PC-9 (cell line): ENCODE measurements at regions of chr7 and their contacts with region 1.

Region 1: GRCh38 chr7:47786557-47787248 is 161.6 kb downstream of the PKD1L1 start:
- DNase-seq: peak; percentile 99 to 100
- H3K4me3 ChIP-seq: peak overlapping the region; percentile 20
- H3K27ac ChIP-seq: peak overlapping the region; percentile 93
- H3K4me1 ChIP-seq: peaks cover 77% of the 10 kb centered on the region
- H3K27me3 ChIP-seq: no peaks in the 10 kb centered on the region
- CTCF ChIP-seq: no peak

Region 2: GRCh38 chr7:47474937-47475878 is 311.5 kb before region 1 on chr7:
- CTCF ChIA-PET with region 1: no interaction called
- POLR2A ChIA-PET with region 1: no interaction called
- intact Hi-C with region 1: loop called (anchors 1 kb)
- DNase-seq: peak; percentile 99 to 100
- H3K4me3 ChIP-seq: peak overlapping the region; percentile 16; the same call in 1 of the 2 replicates
- H3K27ac ChIP-seq: peak overlapping the region; percentile 87
- H3K4me1 ChIP-seq: peaks cover 58% of the 10 kb centered on the region
- H3K27me3 ChIP-seq: no peaks in the 10 kb centered on the region
- CTCF ChIP-seq: no peak; the same call in 1 of the 2 replicates

Region 3: DNA sequence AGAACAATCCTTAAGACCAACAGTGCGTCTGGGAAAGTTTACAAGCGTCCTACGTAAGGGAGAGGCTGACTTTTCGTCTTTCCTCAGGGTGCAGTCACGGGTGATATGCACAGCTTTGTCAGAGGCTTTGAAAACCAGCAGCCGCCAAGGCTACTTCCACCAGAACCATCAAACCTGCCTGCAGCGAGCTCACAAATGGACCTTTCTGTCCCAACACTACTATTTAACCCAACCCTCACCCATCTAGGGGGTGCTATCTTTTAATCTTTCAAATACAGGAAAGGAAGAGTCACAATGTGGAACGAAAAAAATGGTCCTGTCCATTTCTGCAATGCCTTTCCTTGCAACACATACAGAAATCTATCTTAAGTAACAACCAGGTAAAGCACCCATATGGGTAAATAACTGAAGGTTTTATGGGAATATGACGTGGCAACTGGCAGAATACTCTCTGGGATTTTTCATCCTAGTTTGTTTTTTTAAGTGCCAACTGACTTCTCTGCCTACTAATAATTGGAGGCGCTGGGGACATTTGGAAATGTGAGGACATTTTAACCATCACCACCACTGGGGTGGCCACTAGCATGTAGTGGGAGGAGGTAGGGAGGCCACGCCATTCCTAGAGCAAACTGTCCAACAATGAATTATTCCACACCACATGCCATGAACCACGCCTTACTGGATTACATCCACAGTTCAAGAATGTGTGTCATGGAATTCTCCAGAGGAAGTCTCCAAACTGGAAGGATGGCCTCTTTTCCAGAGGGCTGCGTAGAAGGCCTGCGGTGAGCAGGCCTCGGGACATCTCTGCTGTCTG is 229.3 kb before region 1 on chr7:
- CTCF ChIA-PET with region 1: no interaction called
- POLR2A ChIA-PET with region 1: interaction called, 20 read pairs
- intact Hi-C with region 1: no loop called
- DNase-seq: no peak
- H3K4me3 ChIP-seq: no peak overlapping the region
- H3K27ac ChIP-seq: no peak overlapping the region
- H3K4me1 ChIP-seq: peaks cover 30% of the 10 kb centered on the region
- H3K27me3 ChIP-seq: no peaks in the 10 kb centered on the region
- CTCF ChIP-seq: no peak

Region 4: GRCh38 chr7:47677667-47678111 is 109.0 kb before region 1 on chr7:
- CTCF ChIA-PET with region 1: no interaction called
- POLR2A ChIA-PET with region 1: no interaction called
- intact Hi-C with region 1: loop called (anchors 1 kb)
- DNase-seq: peak; percentile 28 to 99
- H3K4me3 ChIP-seq: no peak overlapping the region
- H3K27ac ChIP-seq: peak overlapping the region; percentile 88
- H3K4me1 ChIP-seq: peaks cover 58% of the 10 kb centered on the region
- H3K27me3 ChIP-seq: no peaks in the 10 kb centered on the region
- CTCF ChIP-seq: no peak

Region 5: GRCh38 chr7:47724335-47724982 is 62.2 kb before region 1 on chr7:
- CTCF ChIA-PET with region 1: no interaction called
- POLR2A ChIA-PET with region 1: no interaction called
- intact Hi-C with region 1: loop called (anchors 1 kb)
- DNase-seq: peak; percentile 67 to 90
- H3K4me3 ChIP-seq: peak overlapping the region; percentile 16; the same call in 1 of the 2 replicates
- H3K27ac ChIP-seq: peak overlapping the region; percentile 94
- H3K4me1 ChIP-seq: peaks cover 30% of the 10 kb centered on the region
- H3K27me3 ChIP-seq: no peaks in the 10 kb centered on the region
- CTCF ChIP-seq: no peak

Region 6: GRCh38 chr7:47818796-47819606 is 32.3 kb after region 1 on chr7:
- CTCF ChIA-PET with region 1: interaction called, 3 read pairs
- POLR2A ChIA-PET with region 1: no interaction called
- intact Hi-C with region 1: loop called (anchors 1 kb)
- DNase-seq: peak; percentile 81 to 83
- H3K4me3 ChIP-seq: no peak overlapping the region
- H3K27ac ChIP-seq: peak overlapping the region; percentile 43
- H3K4me1 ChIP-seq: peaks cover 38% of the 10 kb centered on the region
- H3K27me3 ChIP-seq: no peaks in the 10 kb centered on the region
- CTCF ChIP-seq: peak; percentile 100